Naive thymus-derived CD4-positive, alpha-beta T cell (primary cell): ENCODE measurements at regions of chr11 and their contacts with region 1.

Region 1: GRCh38 chr11:111454561-111455192 is 57.5 kb downstream of the BTG4 start:
- DNase-seq: peak in 3 of 9 donors; percentile 14 to 64 (median 23)
- ATAC-seq: no peak
- H3K4me3 ChIP-seq: no peak overlapping the region
- H3K4me3 Mint-ChIP-seq: no peak overlapping the region
- H3K27ac ChIP-seq: no peak overlapping the region
- H3K27ac Mint-ChIP-seq: no peak overlapping the region
- H3K4me1 ChIP-seq: no peaks in the 10 kb centered on the region
- H3K4me1 Mint-ChIP-seq: peaks cover 0 to 3% (median 0%) of the 10 kb centered on the region in 7 donors
- H3K27me3 ChIP-seq: no peaks in the 10 kb centered on the region
- H3K27me3 Mint-ChIP-seq: peaks cover 0 to 17% (median 8%) of the 10 kb centered on the region in 5 donors

Region 2: DNA sequence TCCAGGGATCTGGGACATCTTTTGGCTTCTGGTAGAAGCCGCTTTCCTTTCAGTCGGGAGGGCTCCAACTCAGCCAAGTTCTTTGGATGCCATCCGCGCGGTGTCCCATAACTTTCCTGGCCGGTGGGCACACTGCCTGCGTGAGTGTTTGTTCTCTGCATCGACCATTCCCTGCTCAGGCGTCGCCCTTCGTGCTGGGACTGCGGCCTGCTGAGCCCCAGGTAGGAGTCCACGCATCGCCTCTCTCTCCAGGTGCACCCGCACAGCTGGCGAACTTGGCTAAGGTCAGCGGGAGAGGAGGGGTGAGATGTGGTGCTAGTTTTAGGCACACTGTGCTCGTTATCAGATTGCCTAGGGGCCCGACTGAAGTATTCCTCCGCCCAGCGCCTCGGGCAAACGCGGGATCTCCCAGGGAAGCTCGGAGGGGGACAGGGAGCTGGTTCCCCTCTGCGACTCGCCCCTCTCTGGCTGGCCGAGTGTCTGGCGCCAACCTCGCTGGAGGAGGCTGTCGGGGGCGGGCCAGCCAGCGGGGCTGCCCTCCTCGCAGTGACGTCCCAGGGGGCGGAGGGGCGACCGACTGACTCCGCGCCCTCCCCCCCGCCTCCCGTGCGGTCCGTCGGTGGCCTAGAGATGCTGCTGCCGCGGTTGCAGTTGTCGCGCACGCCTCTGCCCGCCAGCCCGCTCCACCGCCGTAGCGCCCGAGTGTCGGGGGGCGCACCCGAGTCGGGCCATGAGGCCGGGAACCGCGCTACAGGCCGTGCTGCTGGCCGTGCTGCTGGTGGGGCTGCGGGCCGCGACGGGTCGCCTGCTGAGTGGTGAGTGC is 85.6 kb after region 1 on chr11 and contains the start of gene LAYN:
- CTCF ChIA-PET with region 1: no interaction called
- POLR2A ChIA-PET with region 1: no interaction called
- intact Hi-C with region 1: loop called in 1 of 2 experiments (anchors 1 kb)
- DNase-seq: peak in 7 of 9 donors; percentile 16 to 40 (median 22)
- ATAC-seq: peak; percentile 49
- H3K4me3 ChIP-seq: peak within 1 kb of the TSS; percentile 31
- H3K4me3 Mint-ChIP-seq: peak within 1 kb of the TSS; percentile 74 to 88 (median 82)
- H3K27ac ChIP-seq: no peak within 1 kb of the TSS
- H3K27ac Mint-ChIP-seq: peak within 1 kb of the TSS; percentile 9 to 85 (median 54)
- H3K4me1 ChIP-seq: peaks cover 4 to 20% of the 10 kb centered on the region in 2 donors
- H3K4me1 Mint-ChIP-seq: peaks cover 14 to 38% (median 30%) of the 10 kb centered on the region in 7 donors
- H3K27me3 ChIP-seq: peaks cover 3 to 4% of the 10 kb centered on the region in 2 donors
- H3K27me3 Mint-ChIP-seq: peaks cover 42 to 81% (median 60%) of the 10 kb centered on the region in 5 donors
- total RNA-seq, gene LAYN: 0.27 to 8.7 (median 0.87) TPM

Region 3: DNA sequence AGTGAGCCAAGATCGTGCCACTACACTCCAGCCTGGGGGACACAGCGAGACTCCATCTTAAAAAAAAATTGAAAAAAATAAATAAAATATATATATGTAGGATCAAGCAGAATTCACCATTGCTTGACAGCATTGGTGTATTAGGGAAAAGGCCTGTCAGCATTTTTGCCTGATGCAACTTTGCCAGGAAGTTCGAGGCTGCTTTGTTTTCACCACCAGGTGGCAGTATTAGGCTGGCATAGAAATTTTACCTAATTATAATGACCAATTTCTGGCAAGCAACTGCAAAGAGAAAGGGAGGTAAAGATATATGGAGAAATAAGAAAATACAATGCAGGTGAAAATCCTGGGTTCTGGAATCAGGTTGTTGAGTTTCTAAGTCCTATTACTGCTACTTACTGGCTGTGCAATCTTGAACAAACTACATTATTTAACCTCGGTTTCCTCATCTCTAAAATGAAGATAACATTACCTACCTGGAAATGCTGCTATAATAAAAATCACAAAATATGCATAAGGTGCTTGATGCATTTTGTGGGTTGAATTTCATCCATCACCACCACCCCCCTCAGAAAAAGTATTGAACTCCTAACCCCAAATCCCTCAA is 110.5 kb after region 1 on chr11:
- CTCF ChIA-PET with region 1: no interaction called
- POLR2A ChIA-PET with region 1: no interaction called
- intact Hi-C with region 1: loop called (anchors 1 kb)
- DNase-seq: peak; percentile 11 to 64 (median 54)
- ATAC-seq: peak; percentile 60
- H3K4me3 ChIP-seq: no peak overlapping the region
- H3K4me3 Mint-ChIP-seq: no peak overlapping the region
- H3K27ac ChIP-seq: no peak overlapping the region
- H3K27ac Mint-ChIP-seq: no peak overlapping the region
- H3K4me1 ChIP-seq: no peaks in the 10 kb centered on the region
- H3K4me1 Mint-ChIP-seq: peaks cover 0 to 1% (median 0%) of the 10 kb centered on the region in 7 donors
- H3K27me3 ChIP-seq: no peaks in the 10 kb centered on the region
- H3K27me3 Mint-ChIP-seq: peaks cover 0 to 3% (median 0%) of the 10 kb centered on the region in 5 donors

Region 4: GRCh38 chr11:112828433-112828832 is 1373.8 kb after region 1 on chr11:
- CTCF ChIA-PET with region 1: no interaction called
- POLR2A ChIA-PET with region 1: no interaction called
- intact Hi-C with region 1: no loop called
- DNase-seq: no peak
- ATAC-seq: no peak
- H3K4me3 ChIP-seq: no peak overlapping the region
- H3K4me3 Mint-ChIP-seq: no peak overlapping the region
- H3K27ac ChIP-seq: no peak overlapping the region
- H3K27ac Mint-ChIP-seq: no peak overlapping the region
- H3K4me1 ChIP-seq: no peaks in the 10 kb centered on the region
- H3K4me1 Mint-ChIP-seq: no peaks in the 10 kb centered on the region
- H3K27me3 ChIP-seq: no peaks in the 10 kb centered on the region
- H3K27me3 Mint-ChIP-seq: peaks cover 5 to 32% (median 9%) of the 10 kb centered on the region in 5 donors